ENCODE measurements at regions of chr3 and their contacts with region 1.

Region 1: GRCh38 chr3:137514853-137515252 is 249.3 kb upstream of the SOX14 start:
- DNase-seq: no peak
- ATAC-seq: no peak
- H3K4me3 ChIP-seq: no peak overlapping the region
- H3K27ac ChIP-seq: no peak overlapping the region
- H3K4me1 ChIP-seq: no peaks in the 10 kb centered on the region
- H3K27me3 ChIP-seq: peaks cover 8% of the 10 kb centered on the region
- CTCF ChIP-seq: no peak

Region 2: GRCh38 chr3:137542049-137542448 is 27.2 kb after region 1 on chr3:
- CTCF ChIA-PET with region 1: no interaction called
- POLR2A ChIA-PET with region 1: no interaction called
- intact Hi-C with region 1: no loop called
- DNase-seq: no peak
- ATAC-seq: no peak
- H3K4me3 ChIP-seq: no peak overlapping the region
- H3K27ac ChIP-seq: no peak overlapping the region
- H3K4me1 ChIP-seq: no peaks in the 10 kb centered on the region
- H3K27me3 ChIP-seq: no peaks in the 10 kb centered on the region
- CTCF ChIP-seq: no peak

Region 3: DNA sequence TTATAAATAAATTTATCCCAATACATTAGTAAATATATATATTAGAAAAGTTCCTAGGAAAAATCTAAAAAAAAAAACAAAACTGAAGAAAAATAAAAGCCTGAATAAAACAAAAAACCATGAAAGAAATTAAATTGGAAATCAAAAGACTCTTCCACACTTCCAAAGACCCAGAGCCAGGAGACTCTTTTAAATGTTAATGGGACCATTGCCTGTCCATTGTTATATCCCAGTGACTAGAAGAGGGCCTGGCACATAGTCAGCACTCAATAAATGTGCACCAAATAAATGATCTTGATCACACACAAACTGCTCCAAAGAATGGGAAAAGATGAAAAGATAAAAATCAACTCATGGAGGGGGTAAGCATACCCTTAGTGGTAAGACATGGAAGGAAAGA is 443.8 kb after region 1 on chr3:
- CTCF ChIA-PET with region 1: no interaction called
- POLR2A ChIA-PET with region 1: interaction called, 10 read pairs
- intact Hi-C with region 1: no loop called
- DNase-seq: no peak
- ATAC-seq: no peak
- H3K4me3 ChIP-seq: no peak overlapping the region
- H3K27ac ChIP-seq: no peak overlapping the region
- H3K4me1 ChIP-seq: no peaks in the 10 kb centered on the region
- H3K27me3 ChIP-seq: peaks cover 10% of the 10 kb centered on the region; the same call in 1 of the 2 replicates
- CTCF ChIP-seq: no peak